Naive thymus-derived CD4-positive, alpha-beta T cell (primary cell): ENCODE measurements at regions of chr4 and their contacts with region 1.

Region 1: GRCh38 chr4:89024051-89024675 is 32.8 kb downstream of the FAM13A start:
- DNase-seq: peak in 8 of 9 donors; percentile 33 to 80 (median 72)
- ATAC-seq: peak; percentile 99
- H3K4me3 ChIP-seq: no peak overlapping the region
- H3K4me3 Mint-ChIP-seq: no peak overlapping the region
- H3K27ac ChIP-seq: no peak overlapping the region
- H3K27ac Mint-ChIP-seq: no peak overlapping the region
- H3K4me1 ChIP-seq: no peaks in the 10 kb centered on the region
- H3K4me1 Mint-ChIP-seq: peaks cover 0 to 31% (median 6%) of the 10 kb centered on the region in 7 donors
- H3K27me3 ChIP-seq: no peaks in the 10 kb centered on the region
- H3K27me3 Mint-ChIP-seq: peaks cover 0 to 10% (median 0%) of the 10 kb centered on the region in 5 donors

Region 2: GRCh38 chr4:88211473-88212252 is 812.5 kb before region 1 on chr4:
- CTCF ChIA-PET with region 1: no interaction called
- POLR2A ChIA-PET with region 1: no interaction called
- intact Hi-C with region 1: loop called in 1 of 2 experiments (anchors 10 kb)
- DNase-seq: peak in 7 of 9 donors; percentile 28 to 65 (median 55)
- ATAC-seq: peak; percentile 60
- H3K4me3 ChIP-seq: no peak overlapping the region
- H3K4me3 Mint-ChIP-seq: no peak overlapping the region
- H3K27ac ChIP-seq: no peak overlapping the region
- H3K27ac Mint-ChIP-seq: no peak overlapping the region
- H3K4me1 ChIP-seq: no peaks in the 10 kb centered on the region
- H3K4me1 Mint-ChIP-seq: peaks cover 0 to 7% (median 4%) of the 10 kb centered on the region in 7 donors
- H3K27me3 ChIP-seq: no peaks in the 10 kb centered on the region
- H3K27me3 Mint-ChIP-seq: peaks cover 0 to 21% (median 0%) of the 10 kb centered on the region in 5 donors

Region 3: DNA sequence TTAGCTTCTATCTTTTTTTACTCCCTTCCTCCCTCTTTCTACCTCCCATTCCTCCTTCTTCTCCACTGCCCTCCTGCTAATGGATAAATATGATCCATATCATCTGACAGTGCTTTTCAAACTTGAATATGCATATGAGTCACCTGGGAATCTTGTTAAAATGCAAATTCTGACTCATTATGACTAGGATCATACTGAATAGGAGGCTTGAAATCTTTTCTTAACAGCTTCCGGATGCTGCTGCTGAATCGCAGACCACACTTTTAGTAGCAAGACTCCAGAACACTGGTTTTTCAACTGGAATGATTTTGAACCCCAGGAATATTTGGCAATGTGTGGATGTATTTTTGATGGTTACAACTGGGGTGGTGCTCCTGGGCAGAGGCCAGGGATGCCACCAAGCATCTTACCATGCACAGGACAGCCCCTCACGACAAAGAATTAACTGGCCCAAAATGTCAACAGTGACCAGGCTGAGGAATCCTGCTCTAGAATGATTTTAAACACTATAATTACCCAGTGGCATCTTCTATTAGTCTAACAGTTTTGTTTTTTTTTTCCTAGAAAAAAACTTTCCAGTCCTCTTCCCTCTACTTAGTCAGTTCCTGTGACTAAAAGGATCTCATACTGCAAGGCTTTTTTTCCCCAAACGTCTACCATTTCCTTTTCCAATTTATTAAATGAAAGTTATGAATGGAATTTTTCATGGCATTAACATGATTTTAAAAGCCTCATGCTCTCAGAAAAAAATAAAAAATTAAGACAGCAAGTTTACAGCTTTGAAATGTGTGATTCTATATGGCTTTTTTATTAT is 490.0 kb before region 1 on chr4:
- CTCF ChIA-PET with region 1: interaction called, 8 read pairs
- POLR2A ChIA-PET with region 1: interaction called, 3 read pairs
- intact Hi-C with region 1: loop called in 1 of 2 experiments (anchors 1 kb)
- DNase-seq: no peak
- ATAC-seq: no peak
- H3K4me3 ChIP-seq: no peak overlapping the region
- H3K4me3 Mint-ChIP-seq: no peak overlapping the region
- H3K27ac ChIP-seq: no peak overlapping the region
- H3K27ac Mint-ChIP-seq: no peak overlapping the region
- H3K4me1 ChIP-seq: no peaks in the 10 kb centered on the region
- H3K4me1 Mint-ChIP-seq: no peaks in the 10 kb centered on the region
- H3K27me3 ChIP-seq: no peaks in the 10 kb centered on the region
- H3K27me3 Mint-ChIP-seq: no peaks in the 10 kb centered on the region

Region 4: GRCh38 chr4:88659055-88659889 is 364.9 kb before region 1 on chr4:
- CTCF ChIA-PET with region 1: no interaction called
- POLR2A ChIA-PET with region 1: no interaction called
- intact Hi-C with region 1: loop called in 1 of 2 experiments (anchors 1 kb)
- DNase-seq: peak in 7 of 9 donors; percentile 23 to 53 (median 44)
- ATAC-seq: peak; percentile 75
- H3K4me3 ChIP-seq: no peak overlapping the region
- H3K4me3 Mint-ChIP-seq: no peak overlapping the region
- H3K27ac ChIP-seq: no peak overlapping the region
- H3K27ac Mint-ChIP-seq: peak overlapping the region in 6 of 9 donors; percentile 5 to 86 (median 41)
- H3K4me1 ChIP-seq: no peaks in the 10 kb centered on the region
- H3K4me1 Mint-ChIP-seq: peaks cover 8 to 39% (median 24%) of the 10 kb centered on the region in 7 donors
- H3K27me3 ChIP-seq: no peaks in the 10 kb centered on the region
- H3K27me3 Mint-ChIP-seq: no peaks in the 10 kb centered on the region

Region 5: GRCh38 chr4:88672987-88673386 is 351.2 kb before region 1 on chr4:
- CTCF ChIA-PET with region 1: no interaction called
- POLR2A ChIA-PET with region 1: no interaction called
- intact Hi-C with region 1: loop called (anchors 1 to 2 kb)
- DNase-seq: peak in 6 of 9 donors; percentile 11 to 52 (median 34)
- ATAC-seq: peak; percentile 64
- H3K4me3 ChIP-seq: no peak overlapping the region
- H3K4me3 Mint-ChIP-seq: no peak overlapping the region
- H3K27ac ChIP-seq: no peak overlapping the region
- H3K27ac Mint-ChIP-seq: peak overlapping the region in 5 of 9 donors; percentile 2 to 59 (median 54)
- H3K4me1 ChIP-seq: no peaks in the 10 kb centered on the region
- H3K4me1 Mint-ChIP-seq: peaks cover 0 to 8% (median 5%) of the 10 kb centered on the region in 7 donors
- H3K27me3 ChIP-seq: no peaks in the 10 kb centered on the region
- H3K27me3 Mint-ChIP-seq: no peaks in the 10 kb centered on the region

Region 6: DNA sequence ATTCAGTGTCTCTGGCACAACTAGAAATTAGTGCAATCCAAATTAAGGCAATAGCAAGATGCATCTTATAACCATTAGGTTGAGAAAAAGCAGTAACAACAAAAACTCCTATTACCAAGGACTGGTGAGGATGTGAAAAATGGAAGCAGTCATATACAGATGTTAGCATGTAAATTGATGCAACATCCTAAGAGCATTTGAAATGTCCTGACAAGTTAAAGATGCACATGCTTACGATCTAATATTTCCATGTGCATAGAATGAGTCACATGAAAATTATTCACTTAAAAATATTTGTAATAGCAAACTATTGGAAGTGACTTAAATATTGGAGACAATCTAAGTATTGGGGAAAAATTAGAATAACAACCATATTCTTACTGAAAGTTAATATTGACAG is 130.2 kb before region 1 on chr4:
- CTCF ChIA-PET with region 1: interaction called, 3 read pairs
- POLR2A ChIA-PET with region 1: no interaction called
- intact Hi-C with region 1: loop called in 1 of 2 experiments (anchors 5 kb)
- DNase-seq: no peak
- ATAC-seq: no peak
- H3K4me3 ChIP-seq: no peak overlapping the region
- H3K4me3 Mint-ChIP-seq: no peak overlapping the region
- H3K27ac ChIP-seq: no peak overlapping the region
- H3K27ac Mint-ChIP-seq: no peak overlapping the region
- H3K4me1 ChIP-seq: no peaks in the 10 kb centered on the region
- H3K4me1 Mint-ChIP-seq: peaks cover 0 to 1% (median 0%) of the 10 kb centered on the region in 7 donors
- H3K27me3 ChIP-seq: no peaks in the 10 kb centered on the region
- H3K27me3 Mint-ChIP-seq: peaks cover 0 to 4% (median under 1%) of the 10 kb centered on the region in 5 donors

Region 7: GRCh38 chr4:88938135-88938534 is 86.0 kb before region 1 on chr4:
- CTCF ChIA-PET with region 1: no interaction called
- POLR2A ChIA-PET with region 1: no interaction called
- intact Hi-C with region 1: loop called in 1 of 2 experiments (anchors 5 kb)
- DNase-seq: no peak
- ATAC-seq: no peak
- H3K4me3 ChIP-seq: no peak overlapping the region
- H3K4me3 Mint-ChIP-seq: no peak overlapping the region
- H3K27ac ChIP-seq: no peak overlapping the region
- H3K27ac Mint-ChIP-seq: peak overlapping the region in 2 of 9 donors; percentile 15 to 30
- H3K4me1 ChIP-seq: peaks cover 0 to 33% of the 10 kb centered on the region in 2 donors
- H3K4me1 Mint-ChIP-seq: peaks cover 20 to 69% (median 54%) of the 10 kb centered on the region in 7 donors
- H3K27me3 ChIP-seq: no peaks in the 10 kb centered on the region
- H3K27me3 Mint-ChIP-seq: no peaks in the 10 kb centered on the region